ENCODE measurements at regions of chr12 and their contacts with region 1.

Region 1: GRCh38 chr12:114668151-114668885 is 15.7 kb downstream of the TBX3 start:
- DNase-seq: peak; percentile 91 to 94
- ATAC-seq: peak; percentile 85 to 93
- H3K4me3 ChIP-seq: peak overlapping the region; percentile 57
- H3K27ac ChIP-seq: peak overlapping the region; percentile 84 to 92
- H3K4me1 ChIP-seq: peaks cover 22% of the 10 kb centered on the region; the same call in 2 of the 3 replicates
- CTCF ChIP-seq: peak; percentile 63
- EP300 ChIP-seq: no peak
- POLR2A ChIP-seq: no peak
- RAD21 ChIP-seq: peak; percentile 89 to 96

Region 2: GRCh38 chr12:114562654-114563053 is 105.7 kb before region 1 on chr12:
- CTCF ChIA-PET with region 1: no interaction called
- POLR2A ChIA-PET with region 1: no interaction called
- DNase-seq: no peak
- ATAC-seq: no peak
- H3K4me3 ChIP-seq: no peak overlapping the region
- H3K27ac ChIP-seq: no peak overlapping the region
- H3K4me1 ChIP-seq: no peaks in the 10 kb centered on the region
- CTCF ChIP-seq: no peak
- EP300 ChIP-seq: no peak
- POLR2A ChIP-seq: no peak
- RAD21 ChIP-seq: no peak

Region 3: DNA sequence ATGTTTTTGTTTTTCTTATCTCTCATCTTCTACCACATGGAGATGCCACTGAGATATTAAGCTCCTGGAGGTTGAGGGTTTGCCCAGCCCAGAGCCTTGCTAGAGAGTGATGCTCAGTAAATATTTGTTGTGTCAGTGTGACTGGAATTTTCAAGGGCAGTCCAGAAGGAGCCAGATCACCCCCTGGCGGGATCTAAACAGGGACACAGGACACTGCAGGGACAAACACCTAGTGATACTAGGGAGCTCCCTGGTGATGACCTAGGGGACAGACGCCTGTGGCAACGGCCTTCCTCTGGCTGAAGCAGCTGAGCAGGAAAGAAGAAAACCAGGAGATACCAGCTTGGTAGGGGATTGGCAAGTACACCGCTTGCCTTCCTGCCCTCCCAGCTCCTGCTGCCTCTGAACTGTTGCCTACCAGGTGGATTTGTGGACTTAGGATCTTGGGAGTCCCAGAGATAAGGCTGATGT is 730.0 kb after region 1 on chr12:
- CTCF ChIA-PET with region 1: interaction called, 18 read pairs
- POLR2A ChIA-PET with region 1: interaction called, 3 read pairs
- DNase-seq: peak; percentile 49 to 85
- ATAC-seq: peak; percentile 87 to 93
- H3K4me3 ChIP-seq: no peak overlapping the region
- H3K27ac ChIP-seq: peak overlapping the region; percentile 42 to 55; a peak in 3 of 6 replicates
- H3K4me1 ChIP-seq: peaks cover 23% of the 10 kb centered on the region; the same call in 2 of the 3 replicates
- CTCF ChIP-seq: peak; percentile 58
- EP300 ChIP-seq: no peak
- POLR2A ChIP-seq: no peak
- RAD21 ChIP-seq: peak; percentile 89 to 91

Region 4: GRCh38 chr12:115771065-115771464 is 1102.7 kb after region 1 on chr12:
- CTCF ChIA-PET with region 1: interaction called, 11 read pairs
- POLR2A ChIA-PET with region 1: interaction called, 5 read pairs
- DNase-seq: peak in 1 of 2 experiments; percentile 51
- ATAC-seq: peak; percentile 78 to 87; a peak in 5 of 6 replicates
- H3K4me3 ChIP-seq: no peak overlapping the region
- H3K27ac ChIP-seq: no peak overlapping the region; a peak in 1 of 6 replicates
- H3K4me1 ChIP-seq: peaks cover 5% of the 10 kb centered on the region; the same call in 1 of the 3 replicates
- CTCF ChIP-seq: peak; percentile 41
- EP300 ChIP-seq: no peak
- POLR2A ChIP-seq: no peak
- RAD21 ChIP-seq: peak; percentile 55 to 64

Measured in A549 (cell line).